CD4-positive, alpha-beta T cell (primary cell): ENCODE measurements at regions of chr15 and their contacts with region 1.

Region 1: DNA sequence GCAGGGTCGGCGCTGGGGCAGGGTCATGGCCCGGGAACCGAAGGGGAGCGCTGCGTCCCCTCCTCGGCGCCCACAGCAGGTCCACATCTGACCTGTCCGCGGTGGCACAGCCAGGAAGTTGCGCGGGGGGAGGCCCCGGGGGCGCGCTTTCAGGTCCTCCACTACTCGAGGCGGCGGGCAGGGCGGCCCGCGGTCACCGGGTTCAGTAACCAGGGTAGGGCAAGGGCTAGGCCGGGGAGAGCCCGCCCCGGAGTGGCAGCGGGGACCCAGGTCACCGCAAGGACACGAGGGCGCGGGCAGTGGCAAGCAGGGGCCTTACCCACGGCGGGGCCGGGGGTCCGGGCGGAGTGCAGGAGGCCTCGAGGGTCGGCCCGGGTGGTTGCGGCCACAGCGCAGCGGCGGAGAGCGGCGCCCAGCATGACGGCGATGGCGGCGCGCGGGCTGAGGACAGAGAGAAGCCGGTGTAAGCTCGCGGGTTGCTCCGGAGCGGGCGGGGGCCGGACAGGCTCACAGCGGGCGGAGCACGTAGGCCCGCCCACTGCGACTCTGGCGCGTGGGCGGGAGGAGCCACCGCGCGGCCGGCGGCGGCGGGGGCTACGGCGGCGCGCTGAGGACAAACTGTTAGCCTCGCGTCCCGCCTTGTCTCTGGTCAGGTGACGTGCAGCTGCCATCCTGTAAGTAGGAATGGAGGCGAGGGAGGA is at the start of gene COX5A:
- DNase-seq: peak; percentile 83 to 97 (median 88)
- ATAC-seq: peak; percentile 95
- H3K4me3 ChIP-seq: peak within 1 kb of the TSS; percentile 82
- H3K4me3 Mint-ChIP-seq: peak within 1 kb of the TSS; percentile 98
- H3K27ac ChIP-seq: peak within 1 kb of the TSS; percentile 58 to 74
- H3K27ac Mint-ChIP-seq: peak within 1 kb of the TSS; percentile 86
- H3K4me1 ChIP-seq: peaks cover 37% of the 10 kb centered on the region
- H3K4me1 Mint-ChIP-seq: peaks cover 28% of the 10 kb centered on the region
- H3K27me3 ChIP-seq: no peaks in the 10 kb centered on the region
- H3K27me3 Mint-ChIP-seq: no peaks in the 10 kb centered on the region
- CTCF ChIP-seq: no peak
- total RNA-seq, gene COX5A: 40.7 to 44.2 TPM

Region 2: DNA sequence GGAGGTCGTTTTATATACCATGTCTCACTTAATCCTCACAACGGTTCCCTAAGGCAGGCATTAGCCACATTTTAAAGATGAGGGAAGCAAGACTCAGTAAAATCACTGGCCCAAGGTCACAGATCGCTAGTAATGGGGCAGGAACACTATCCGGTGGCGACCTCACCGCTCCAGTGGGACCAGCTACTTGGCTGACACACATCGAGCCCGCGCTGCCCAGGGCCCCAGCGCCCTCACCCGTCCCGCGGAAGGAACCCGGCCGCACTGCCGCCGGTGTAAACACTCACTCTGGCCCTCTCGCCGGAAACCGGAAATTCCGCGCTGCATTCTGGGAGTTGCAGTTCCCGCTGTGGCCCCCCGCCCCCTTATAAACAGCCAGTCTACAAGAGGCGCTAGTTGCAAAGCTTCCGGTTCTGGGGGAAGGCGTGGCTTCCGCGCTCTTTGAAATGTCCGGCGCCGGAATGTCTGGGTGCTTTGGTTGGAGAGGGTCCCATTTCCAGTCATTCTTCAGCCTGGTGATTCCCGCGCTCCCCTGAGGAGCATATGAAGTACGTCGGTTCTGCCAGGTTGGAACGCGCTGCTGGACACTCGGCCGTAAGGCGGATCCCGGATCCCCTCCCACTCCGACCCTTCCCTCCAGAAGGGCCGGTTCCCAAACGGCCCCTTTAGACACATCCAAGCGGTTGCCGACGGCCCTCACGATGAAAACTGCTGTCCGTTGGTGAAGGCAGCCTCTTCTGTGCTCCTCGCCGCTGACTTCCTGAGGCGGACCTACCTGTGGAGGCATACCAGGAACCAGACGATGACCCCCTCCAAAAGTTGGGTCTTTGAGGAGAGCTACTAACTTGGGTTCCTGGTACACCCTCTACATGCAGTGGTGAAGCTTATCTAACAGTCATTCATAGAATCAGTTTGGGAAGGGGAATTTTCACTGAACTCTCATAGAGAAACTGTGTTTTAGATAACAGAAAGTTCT is 476.6 kb before region 1 on chr15 and contains the start of gene UBL7:
- CTCF ChIA-PET with region 1: no interaction called
- POLR2A ChIA-PET with region 1: no interaction called
- intact Hi-C with region 1: loop called in 1 of 2 experiments (anchors 2 kb)
- DNase-seq: peak; percentile 91 to 97 (median 96)
- ATAC-seq: peak; percentile 98
- H3K4me3 ChIP-seq: peak within 1 kb of the TSS; percentile 92
- H3K4me3 Mint-ChIP-seq: peak within 1 kb of the TSS; percentile 97
- H3K27ac ChIP-seq: peak within 1 kb of the TSS; percentile 61 to 62
- H3K27ac Mint-ChIP-seq: peak within 1 kb of the TSS; percentile 84
- H3K4me1 ChIP-seq: peaks cover 19% of the 10 kb centered on the region
- H3K4me1 Mint-ChIP-seq: peaks cover 53% of the 10 kb centered on the region
- H3K27me3 ChIP-seq: no peaks in the 10 kb centered on the region
- H3K27me3 Mint-ChIP-seq: no peaks in the 10 kb centered on the region
- CTCF ChIP-seq: peak; percentile 15
- total RNA-seq, gene UBL7: 14.3 to 17.1 TPM

Region 3: GRCh38 chr15:74620636-74621545 is 316.9 kb before region 1 on chr15:
- CTCF ChIA-PET with region 1: no interaction called
- POLR2A ChIA-PET with region 1: interaction called, 12 read pairs
- intact Hi-C with region 1: loop called in 1 of 2 experiments (anchors 2 kb)
- DNase-seq: peak; percentile 48 to 89 (median 67)
- ATAC-seq: peak; percentile 89
- H3K4me3 ChIP-seq: no peak overlapping the region
- H3K4me3 Mint-ChIP-seq: peak overlapping the region; percentile 78
- H3K27ac ChIP-seq: no peak overlapping the region
- H3K27ac Mint-ChIP-seq: peak overlapping the region; percentile 67
- H3K4me1 ChIP-seq: peaks cover 64% of the 10 kb centered on the region
- H3K4me1 Mint-ChIP-seq: peaks cover 49% of the 10 kb centered on the region
- H3K27me3 ChIP-seq: no peaks in the 10 kb centered on the region
- H3K27me3 Mint-ChIP-seq: no peaks in the 10 kb centered on the region
- CTCF ChIP-seq: peak; percentile 86

Region 4: DNA sequence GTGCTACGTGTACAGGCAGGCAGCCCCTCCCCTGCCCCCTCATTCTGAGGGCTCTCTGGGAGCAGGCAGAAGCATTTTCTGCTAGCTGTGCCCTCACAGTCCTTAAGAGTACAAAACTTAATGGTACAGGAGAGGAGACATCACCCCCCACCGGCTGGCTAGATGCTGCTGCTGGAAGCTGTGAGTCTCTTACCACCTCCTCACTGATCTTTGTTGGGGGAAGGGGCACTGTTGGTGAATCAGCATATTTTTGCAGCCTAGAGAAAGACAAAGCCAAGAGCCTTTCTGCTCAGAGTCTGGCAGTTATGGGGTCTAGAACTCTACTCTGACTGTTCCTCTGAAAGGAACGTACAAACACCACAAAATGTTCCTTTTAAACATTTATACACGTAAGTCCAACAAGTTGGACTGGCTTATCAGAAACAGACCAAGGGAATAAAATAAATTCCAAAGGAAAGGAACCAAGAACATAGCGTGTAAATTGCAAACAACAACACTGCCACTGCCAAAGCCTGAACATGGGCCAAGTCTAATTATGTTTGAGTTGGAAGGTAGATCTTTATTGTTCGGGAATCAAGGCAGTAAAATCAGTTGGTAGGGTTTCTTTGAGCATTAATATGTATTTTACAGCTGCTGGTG is 294.9 kb before region 1 on chr15:
- CTCF ChIA-PET with region 1: no interaction called
- POLR2A ChIA-PET with region 1: no interaction called
- intact Hi-C with region 1: no loop called
- DNase-seq: no peak
- ATAC-seq: no peak
- H3K4me3 ChIP-seq: no peak overlapping the region
- H3K4me3 Mint-ChIP-seq: no peak overlapping the region
- H3K27ac ChIP-seq: no peak overlapping the region
- H3K27ac Mint-ChIP-seq: no peak overlapping the region
- H3K4me1 ChIP-seq: no peaks in the 10 kb centered on the region
- H3K4me1 Mint-ChIP-seq: no peaks in the 10 kb centered on the region
- H3K27me3 ChIP-seq: no peaks in the 10 kb centered on the region
- H3K27me3 Mint-ChIP-seq: no peaks in the 10 kb centered on the region
- CTCF ChIP-seq: no peak

Region 5: GRCh38 chr15:74842581-74843444 is 94.9 kb before region 1 on chr15 and contains the start of gene ULK3:
- CTCF ChIA-PET with region 1: no interaction called
- POLR2A ChIA-PET with region 1: interaction called, 3 read pairs
- intact Hi-C with region 1: loop called in 1 of 2 experiments (anchors 2 kb)
- DNase-seq: peak; percentile 84 to 97 (median 92)
- ATAC-seq: peak; percentile 91
- H3K4me3 ChIP-seq: peak within 1 kb of the TSS; percentile 95
- H3K4me3 Mint-ChIP-seq: peak within 1 kb of the TSS; percentile 93
- H3K27ac ChIP-seq: peak within 1 kb of the TSS; percentile 69 to 82
- H3K27ac Mint-ChIP-seq: peak within 1 kb of the TSS; percentile 86
- H3K4me1 ChIP-seq: peaks cover 61% of the 10 kb centered on the region
- H3K4me1 Mint-ChIP-seq: peaks cover 56% of the 10 kb centered on the region
- H3K27me3 ChIP-seq: no peaks in the 10 kb centered on the region
- H3K27me3 Mint-ChIP-seq: no peaks in the 10 kb centered on the region
- CTCF ChIP-seq: peak; percentile 56
- total RNA-seq, gene ULK3: 37.8 to 38.9 TPM

Region 6: DNA sequence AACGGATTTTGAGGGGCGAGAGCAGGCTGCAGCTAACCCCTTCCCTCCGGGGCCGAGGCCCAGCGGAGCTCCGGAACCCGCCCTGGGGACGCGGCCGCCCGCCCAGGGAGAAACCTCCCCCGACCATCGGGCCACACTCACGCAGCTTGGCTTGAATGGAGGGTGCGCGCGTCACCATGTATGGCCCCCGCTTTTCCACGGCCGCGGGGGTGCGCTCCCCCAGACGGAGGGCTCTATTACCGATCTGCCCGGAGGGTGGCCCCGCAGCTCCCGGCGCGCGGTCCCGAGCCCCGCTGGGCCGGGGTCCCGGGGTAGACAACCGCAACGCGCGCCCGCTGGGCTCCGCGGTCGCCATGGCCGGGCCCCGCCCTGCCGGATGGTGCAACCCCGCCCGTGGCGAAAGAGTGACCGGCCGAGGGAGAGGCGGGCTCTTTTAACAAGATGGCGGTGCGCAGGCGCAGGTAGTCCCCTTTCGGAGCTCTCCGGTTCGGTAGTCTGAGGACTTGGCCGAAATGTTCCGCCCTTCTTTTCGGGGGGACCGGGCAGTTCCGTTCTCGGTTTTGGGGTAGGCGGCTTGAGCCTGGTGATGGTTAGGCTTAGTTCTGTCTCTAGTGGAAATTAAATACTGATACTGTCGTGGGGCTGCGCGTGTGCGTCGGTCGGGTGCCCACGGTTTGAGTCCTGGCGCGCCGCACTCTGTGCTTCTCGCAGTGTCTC is 31.1 kb before region 1 on chr15 and contains the start of gene FAM219B:
- CTCF ChIA-PET with region 1: interaction called, 4 read pairs
- POLR2A ChIA-PET with region 1: interaction called, 17 read pairs
- intact Hi-C with region 1: no loop called
- DNase-seq: peak; percentile 42 to 86 (median 64)
- ATAC-seq: peak; percentile 72
- H3K4me3 ChIP-seq: peak within 1 kb of the TSS; percentile 95
- H3K4me3 Mint-ChIP-seq: peak within 1 kb of the TSS; percentile 99
- H3K27ac ChIP-seq: peak within 1 kb of the TSS; percentile 68 to 80
- H3K27ac Mint-ChIP-seq: peak within 1 kb of the TSS; percentile 99
- H3K4me1 ChIP-seq: peaks cover 38% of the 10 kb centered on the region
- H3K4me1 Mint-ChIP-seq: peaks cover 42% of the 10 kb centered on the region
- H3K27me3 ChIP-seq: no peaks in the 10 kb centered on the region
- H3K27me3 Mint-ChIP-seq: no peaks in the 10 kb centered on the region
- CTCF ChIP-seq: no peak
- total RNA-seq, gene FAM219B: 21.5 to 26.8 TPM

Region 7: GRCh38 chr15:75023181-75023871 is 85.6 kb after region 1 on chr15 and contains the start of gene PPCDC:
- CTCF ChIA-PET with region 1: interaction called, 3 read pairs
- POLR2A ChIA-PET with region 1: interaction called, 6 read pairs
- intact Hi-C with region 1: loop called in 1 of 2 experiments (anchors 2 kb)
- DNase-seq: peak; percentile 83 to 96 (median 90)
- ATAC-seq: peak; percentile 100
- H3K4me3 ChIP-seq: peak within 1 kb of the TSS; percentile 81
- H3K4me3 Mint-ChIP-seq: peak within 1 kb of the TSS; percentile 99
- H3K27ac ChIP-seq: peak within 1 kb of the TSS; percentile 46 to 50
- H3K27ac Mint-ChIP-seq: peak within 1 kb of the TSS; percentile 94
- H3K4me1 ChIP-seq: peaks cover 20% of the 10 kb centered on the region
- H3K4me1 Mint-ChIP-seq: peaks cover 23% of the 10 kb centered on the region
- H3K27me3 ChIP-seq: no peaks in the 10 kb centered on the region
- H3K27me3 Mint-ChIP-seq: no peaks in the 10 kb centered on the region
- CTCF ChIP-seq: no peak
- total RNA-seq, gene PPCDC: 5.5 to 5.8 TPM